ENCODE measurements at regions of chr6 and their contacts with region 1.

Region 1: DNA sequence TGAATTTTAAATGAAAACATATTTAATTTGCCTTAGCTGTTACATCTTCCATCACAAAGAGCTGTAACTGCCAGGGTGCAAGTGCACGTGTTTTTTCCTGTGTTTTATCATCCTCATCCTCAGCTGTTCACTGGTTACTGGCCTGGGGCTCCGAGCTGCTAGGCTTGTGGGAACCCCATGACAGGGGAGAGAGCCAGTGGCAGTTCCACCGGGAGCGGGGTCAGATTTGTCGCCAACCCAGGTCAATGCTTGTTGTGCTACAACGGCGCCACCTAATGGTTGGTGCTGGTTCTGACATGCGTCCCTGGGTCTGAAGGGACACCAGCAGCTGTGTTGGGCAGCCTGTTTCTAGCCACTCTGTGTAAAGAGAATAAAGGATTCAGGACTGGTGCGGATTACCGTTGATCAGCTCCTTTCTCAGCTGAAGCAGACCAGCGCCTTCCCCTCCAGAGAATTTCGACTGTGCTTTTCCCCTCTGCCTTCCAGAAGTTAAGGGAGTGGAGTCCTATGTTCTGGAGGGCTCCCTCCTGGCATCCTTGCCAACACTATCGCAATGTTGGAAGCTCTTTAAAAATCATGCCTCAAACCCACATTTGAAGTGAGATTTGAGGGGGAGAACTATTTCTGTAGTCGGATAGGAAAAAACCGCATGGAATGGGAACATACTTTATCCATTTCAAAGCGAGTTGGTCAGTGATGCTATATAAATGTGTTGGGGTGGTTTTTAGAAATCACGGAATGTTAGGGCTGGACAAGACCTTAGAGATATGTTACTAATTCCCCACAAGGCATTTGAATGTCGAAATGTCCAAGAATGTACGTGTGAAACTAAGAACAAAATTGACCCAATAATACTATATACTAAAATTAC is 32.1 kb downstream of the SUMO4 start:
- DNase-seq: peak; percentile 95
- H3K4me3 Mint-ChIP-seq: no peak overlapping the region
- H3K27ac Mint-ChIP-seq: peak overlapping the region; percentile 58
- H3K4me1 Mint-ChIP-seq: peaks cover 5% of the 10 kb centered on the region
- H3K27me3 Mint-ChIP-seq: no peaks in the 10 kb centered on the region

Region 2: GRCh38 chr6:147825848-147826247 is 1606.3 kb before region 1 on chr6:
- CTCF ChIA-PET with region 1: no interaction called
- POLR2A ChIA-PET with region 1: no interaction called
- intact Hi-C with region 1: no loop called
- DNase-seq: no peak
- H3K4me3 Mint-ChIP-seq: no peak overlapping the region
- H3K27ac Mint-ChIP-seq: no peak overlapping the region
- H3K4me1 Mint-ChIP-seq: no peaks in the 10 kb centered on the region
- H3K27me3 Mint-ChIP-seq: no peaks in the 10 kb centered on the region

Region 3: DNA sequence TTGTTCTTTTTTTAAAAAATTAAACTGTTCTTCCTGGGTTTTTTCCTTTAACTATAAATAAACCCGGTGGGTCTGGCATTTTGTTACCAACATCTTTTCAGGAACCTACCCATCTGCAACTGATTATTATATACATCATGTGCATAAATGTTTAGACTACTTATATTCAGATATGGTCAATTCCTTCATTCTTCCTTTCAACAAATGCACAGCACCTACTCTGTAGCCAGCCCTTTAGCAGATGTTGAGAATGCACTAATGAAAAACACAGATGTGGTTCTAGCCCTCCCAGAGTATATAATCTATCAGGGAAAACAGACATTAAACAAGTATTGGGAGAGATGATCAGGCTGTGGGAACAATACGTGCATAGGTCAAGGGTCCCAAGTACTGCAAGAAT is 448.2 kb before region 1 on chr6:
- CTCF ChIA-PET with region 1: no interaction called
- POLR2A ChIA-PET with region 1: no interaction called
- intact Hi-C with region 1: no loop called
- DNase-seq: no peak
- H3K4me3 Mint-ChIP-seq: no peak overlapping the region
- H3K27ac Mint-ChIP-seq: no peak overlapping the region
- H3K4me1 Mint-ChIP-seq: no peaks in the 10 kb centered on the region
- H3K27me3 Mint-ChIP-seq: no peaks in the 10 kb centered on the region

Region 4: DNA sequence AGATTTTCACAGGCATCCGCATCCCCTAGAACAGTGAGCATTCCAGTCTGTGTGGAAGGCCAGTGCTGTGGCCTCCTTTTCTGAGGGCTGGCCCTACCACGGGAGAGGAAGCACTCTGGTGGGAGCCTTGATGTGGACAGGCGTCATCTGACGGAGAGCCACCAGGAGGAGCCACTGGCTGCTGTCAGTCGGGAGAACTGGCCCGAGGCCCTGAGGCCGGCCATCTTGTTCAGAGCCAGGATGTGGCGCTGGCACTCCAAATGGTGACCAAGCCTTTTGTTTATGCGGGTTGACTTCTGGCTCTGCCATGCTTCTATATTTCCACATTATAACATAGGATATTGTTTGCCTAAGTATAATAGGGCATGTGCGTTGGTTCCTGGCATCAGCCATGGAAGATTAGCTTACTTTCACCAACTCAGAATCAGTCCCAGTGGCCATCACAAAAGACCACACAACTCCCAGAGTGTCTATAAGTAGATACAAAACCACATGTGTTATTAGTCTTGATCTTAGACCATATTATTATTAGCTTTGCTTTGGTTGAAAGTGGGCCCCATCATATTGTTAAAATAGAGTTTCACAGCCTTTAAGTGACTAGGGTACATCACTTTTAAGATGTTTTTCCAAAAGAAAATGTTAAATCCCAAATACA is 388.5 kb before region 1 on chr6:
- CTCF ChIA-PET with region 1: interaction called, 44 read pairs
- POLR2A ChIA-PET with region 1: no interaction called
- intact Hi-C with region 1: no loop called
- DNase-seq: peak; percentile 62
- H3K4me3 Mint-ChIP-seq: no peak overlapping the region
- H3K27ac Mint-ChIP-seq: no peak overlapping the region
- H3K4me1 Mint-ChIP-seq: peaks cover 50% of the 10 kb centered on the region
- H3K27me3 Mint-ChIP-seq: no peaks in the 10 kb centered on the region

Region 5: DNA sequence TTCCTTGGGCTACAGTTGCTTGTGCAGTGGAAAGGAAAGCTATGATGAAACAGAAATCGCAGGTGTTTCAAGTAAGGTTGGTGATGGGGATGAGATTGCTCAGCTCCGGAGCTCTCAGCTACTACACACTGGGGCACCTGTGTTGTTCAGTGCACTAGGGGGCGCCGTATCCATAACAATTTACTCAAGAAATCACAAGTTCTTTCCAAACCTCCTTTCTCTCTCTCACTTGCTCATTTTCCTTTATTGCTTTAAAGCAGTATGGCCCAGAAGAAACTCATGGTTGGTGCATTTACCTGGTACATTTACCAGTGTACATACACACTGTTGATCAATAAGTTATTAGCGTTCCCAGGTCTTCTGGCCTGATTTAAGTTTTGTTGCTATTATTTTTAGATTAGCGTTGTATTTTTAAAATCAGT is 349.8 kb before region 1 on chr6:
- CTCF ChIA-PET with region 1: interaction called, 68 read pairs
- POLR2A ChIA-PET with region 1: interaction called, 3 read pairs
- intact Hi-C with region 1: loop called (anchors 1 kb)
- DNase-seq: peak; percentile 93
- H3K4me3 Mint-ChIP-seq: no peak overlapping the region
- H3K27ac Mint-ChIP-seq: peak overlapping the region; percentile 26
- H3K4me1 Mint-ChIP-seq: peaks cover 79% of the 10 kb centered on the region
- H3K27me3 Mint-ChIP-seq: no peaks in the 10 kb centered on the region

Region 6: DNA sequence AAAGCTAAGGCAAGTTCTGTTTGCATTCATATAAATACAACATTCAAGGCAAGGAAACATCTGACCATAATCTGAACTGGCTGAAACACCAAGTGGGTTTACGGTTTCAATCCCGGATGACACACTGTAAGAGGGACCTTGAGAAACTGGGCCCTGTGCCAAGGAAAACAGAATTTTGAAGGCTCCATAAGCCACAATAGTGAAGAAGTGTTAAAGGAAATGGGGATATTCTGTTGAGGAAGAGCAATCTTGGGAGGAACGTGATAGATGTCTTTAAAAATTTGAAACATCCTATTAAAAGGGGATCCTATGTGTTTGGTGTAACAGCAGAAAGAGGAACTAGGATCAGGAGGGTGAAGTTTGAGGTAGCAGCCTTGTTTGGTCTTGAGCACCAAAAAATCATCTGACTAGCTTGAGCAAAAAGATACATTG is 197.0 kb before region 1 on chr6:
- CTCF ChIA-PET with region 1: interaction called, 7 read pairs
- POLR2A ChIA-PET with region 1: no interaction called
- intact Hi-C with region 1: loop called (anchors 5 kb)
- DNase-seq: no peak
- H3K4me3 Mint-ChIP-seq: no peak overlapping the region
- H3K27ac Mint-ChIP-seq: peak overlapping the region; percentile 91
- H3K4me1 Mint-ChIP-seq: peaks cover 53% of the 10 kb centered on the region
- H3K27me3 Mint-ChIP-seq: no peaks in the 10 kb centered on the region

Region 7: GRCh38 chr6:149357726-149358538 is 74.2 kb before region 1 on chr6:
- CTCF ChIA-PET with region 1: interaction called, 10 read pairs
- POLR2A ChIA-PET with region 1: no interaction called
- intact Hi-C with region 1: no loop called
- DNase-seq: no peak
- H3K4me3 Mint-ChIP-seq: no peak overlapping the region
- H3K27ac Mint-ChIP-seq: peak overlapping the region; percentile 75
- H3K4me1 Mint-ChIP-seq: peaks cover 88% of the 10 kb centered on the region
- H3K27me3 Mint-ChIP-seq: no peaks in the 10 kb centered on the region

Region 8: GRCh38 chr6:149445095-149445466 is 12.9 kb after region 1 on chr6:
- CTCF ChIA-PET with region 1: interaction called, 10 read pairs
- POLR2A ChIA-PET with region 1: no interaction called
- intact Hi-C with region 1: no loop called
- DNase-seq: peak; percentile 68
- H3K4me3 Mint-ChIP-seq: no peak overlapping the region
- H3K27ac Mint-ChIP-seq: peak overlapping the region; percentile 57
- H3K4me1 Mint-ChIP-seq: peaks cover 22% of the 10 kb centered on the region
- H3K27me3 Mint-ChIP-seq: no peaks in the 10 kb centered on the region

Measured in activated CD4-positive, alpha-beta memory T cell treated with anti-CD3 and anti-CD28 coated beads for 36 hours (primary cell).